Left cardiac atrium (tissue), 4 donors: ENCODE measurements at regions of chr7 and their contacts with region 1.

Region 1: DNA sequence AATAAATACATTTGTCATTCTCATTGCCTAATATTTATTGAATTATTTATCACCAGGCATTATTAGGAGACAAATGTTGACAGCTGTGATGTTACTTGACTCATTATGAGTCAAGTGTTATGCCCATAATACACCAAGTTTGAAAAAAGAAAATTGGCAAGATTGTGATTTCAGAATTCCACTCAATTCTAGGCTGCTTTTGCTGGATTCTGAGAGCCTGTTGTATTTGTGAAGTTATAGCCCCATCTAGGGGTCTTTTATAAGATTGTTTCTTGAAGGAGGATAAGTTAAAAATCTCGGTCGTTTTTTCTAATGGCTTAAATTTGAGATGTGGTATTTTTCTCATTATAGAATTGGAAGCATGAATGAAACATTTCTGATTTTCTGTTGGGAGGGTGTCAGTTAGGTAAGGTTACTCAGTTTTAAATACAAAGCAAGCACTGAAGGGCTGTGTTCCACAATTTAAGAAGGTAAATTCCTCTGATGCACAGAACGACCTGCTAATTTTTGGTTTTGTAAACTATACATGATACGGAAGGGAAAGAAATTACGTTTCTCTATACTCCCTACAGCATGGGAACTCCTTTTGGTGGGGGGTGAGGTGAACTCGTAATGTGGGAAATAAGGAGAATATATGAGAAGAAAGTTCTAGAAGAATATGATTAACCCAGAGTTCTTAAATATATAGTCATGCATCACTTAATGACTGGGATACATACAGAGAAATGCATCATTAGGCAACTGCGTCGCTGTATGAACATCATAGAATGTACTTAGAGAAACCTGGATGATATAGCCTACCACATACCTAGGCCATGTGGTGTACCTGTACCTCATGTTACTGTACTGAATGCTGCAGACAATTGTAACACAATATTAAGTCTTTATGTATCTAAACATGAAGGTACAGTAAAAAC is 2.6 kb downstream of the STK31 start:
- DNase-seq: no peak
- ATAC-seq: peak; percentile 67 to 80

Region 2: DNA sequence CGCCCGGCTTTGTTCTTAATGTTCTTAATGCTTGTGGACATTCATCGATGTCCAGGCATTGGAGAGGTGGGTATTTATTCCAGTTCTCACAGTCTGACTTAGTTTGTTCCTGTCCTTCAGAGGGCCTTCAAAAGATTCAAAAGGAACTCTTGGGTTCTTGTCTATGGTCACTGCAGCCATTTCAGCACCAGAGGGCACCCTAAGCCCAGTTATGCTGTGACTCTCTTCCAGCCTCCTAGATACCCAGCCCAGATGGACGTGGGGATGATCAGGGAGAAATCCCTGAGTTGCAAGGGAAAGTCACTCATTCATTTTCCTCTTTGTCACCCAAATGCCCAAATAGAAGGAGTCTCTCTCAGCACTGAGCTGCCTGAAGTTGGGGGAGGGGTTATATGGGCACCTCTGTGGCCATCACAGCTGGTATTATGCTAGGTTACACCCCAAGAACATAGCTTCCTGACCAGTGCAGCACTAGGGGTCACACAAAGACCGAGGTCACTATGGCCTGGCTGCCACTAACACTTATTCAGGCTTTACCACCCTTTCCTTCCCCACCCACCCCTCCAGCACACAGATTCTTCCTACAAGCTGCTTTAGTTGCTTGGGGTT is 141.9 kb before region 1 on chr7:
- intact Hi-C with region 1: loop called (anchors 1 to 5 kb)
- DNase-seq: peak; percentile 73
- ATAC-seq: peak; percentile 91 to 92